GM12878 (cell line): ENCODE measurements at regions of chr10 and their contacts with region 1.

Region 1: GRCh38 chr10:95814011-95814727 is 58.2 kb downstream of the ENTPD1 start:
- DNase-seq: no peak
- ATAC-seq: peak; percentile 6; the same call in 1 of the 3 replicates
- H3K4me3 ChIP-seq: no peak overlapping the region
- H3K27ac ChIP-seq: peak overlapping the region; percentile 26; the same call in 1 of the 2 replicates
- H3K4me1 ChIP-seq: peaks cover 44% of the 10 kb centered on the region
- H3K27me3 ChIP-seq: no peaks in the 10 kb centered on the region
- CTCF ChIP-seq: no peak
- EP300 ChIP-seq: no peak
- POLR2A ChIP-seq: peak; percentile 30; the same call in 1 of the 2 replicates
- RAD21 ChIP-seq: no peak

Region 2: GRCh38 chr10:95741807-95742467 is 72.2 kb before region 1 on chr10:
- CTCF ChIA-PET with region 1: no interaction called
- POLR2A ChIA-PET with region 1: no interaction called
- RAD21 ChIA-PET with region 1: no interaction called
- SMC1A ChIA-PET with region 1: no interaction called
- in situ Hi-C with region 1: no loop called
- intact Hi-C with region 1: no loop called
- DNase-seq: peak; percentile 60
- ATAC-seq: peak; percentile 60
- H3K4me3 ChIP-seq: peak overlapping the region; percentile 27
- H3K27ac ChIP-seq: peak overlapping the region; percentile 85
- H3K4me1 ChIP-seq: peaks cover 9% of the 10 kb centered on the region
- H3K27me3 ChIP-seq: no peaks in the 10 kb centered on the region
- CTCF ChIP-seq: peak in 2 of 3 experiments; percentile 15 to 45; a peak in 3 of 6 replicates
- EP300 ChIP-seq: no peak
- POLR2A ChIP-seq: peak; percentile 43; the same call in 1 of the 2 replicates
- RAD21 ChIP-seq: peak; percentile 71

Region 3: GRCh38 chr10:95783741-95784140 is 30.4 kb before region 1 on chr10:
- CTCF ChIA-PET with region 1: interaction called, 3 read pairs
- POLR2A ChIA-PET with region 1: interaction called, 54 read pairs
- RAD21 ChIA-PET with region 1: interaction called, 108 read pairs
- SMC1A ChIA-PET with region 1: interaction called, 119 read pairs
- in situ Hi-C with region 1: no loop called
- intact Hi-C with region 1: no loop called
- DNase-seq: peak; percentile 94
- ATAC-seq: peak; percentile 50
- H3K4me3 ChIP-seq: no peak overlapping the region
- H3K27ac ChIP-seq: peak overlapping the region; percentile 99
- H3K4me1 ChIP-seq: peaks cover 79% of the 10 kb centered on the region
- H3K27me3 ChIP-seq: no peaks in the 10 kb centered on the region
- CTCF ChIP-seq: no peak
- EP300 ChIP-seq: peak; percentile 93 to 99
- POLR2A ChIP-seq: no peak
- RAD21 ChIP-seq: peak; percentile 8; the same call in 1 of the 2 replicates

Region 4: DNA sequence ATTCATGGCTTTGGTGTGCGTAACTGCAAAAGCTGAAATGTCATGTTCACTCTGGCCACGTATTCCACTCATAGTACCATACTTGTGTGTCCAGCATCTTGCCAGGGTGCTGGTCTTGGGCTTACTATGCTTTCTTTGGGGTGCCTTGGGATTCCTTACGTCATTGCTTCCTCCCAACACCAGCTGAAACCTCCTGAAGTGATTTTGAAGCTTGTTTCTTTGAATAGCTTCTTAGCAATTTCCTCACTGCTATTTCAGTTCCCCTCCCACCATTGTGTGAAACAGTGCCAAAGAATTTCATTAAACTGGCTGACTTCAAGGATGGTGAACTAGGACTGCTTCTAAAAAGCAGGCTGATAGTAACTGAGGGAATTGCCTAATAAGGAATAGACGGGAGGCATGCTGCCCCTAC is 21.3 kb before region 1 on chr10:
- CTCF ChIA-PET with region 1: interaction called, 9 read pairs
- POLR2A ChIA-PET with region 1: interaction called, 21 read pairs
- RAD21 ChIA-PET with region 1: interaction called, 108 read pairs
- SMC1A ChIA-PET with region 1: interaction called, 170 read pairs
- in situ Hi-C with region 1: no loop called
- intact Hi-C with region 1: no loop called
- DNase-seq: peak; percentile 77
- ATAC-seq: peak; percentile 31
- H3K4me3 ChIP-seq: peak overlapping the region; percentile 18; the same call in 1 of the 2 replicates
- H3K27ac ChIP-seq: peak overlapping the region; percentile 93
- H3K4me1 ChIP-seq: peaks cover 64% of the 10 kb centered on the region
- H3K27me3 ChIP-seq: no peaks in the 10 kb centered on the region
- CTCF ChIP-seq: no peak
- EP300 ChIP-seq: peak; percentile 54; a peak in 1 of 4 replicates
- POLR2A ChIP-seq: no peak
- RAD21 ChIP-seq: 0 out of 2 replicates have a peak, but pooled peaks have one; percentile 4

Region 5: GRCh38 chr10:95798096-95798855 is 15.9 kb before region 1 on chr10:
- CTCF ChIA-PET with region 1: interaction called, 9 read pairs
- POLR2A ChIA-PET with region 1: interaction called, 17 read pairs
- RAD21 ChIA-PET with region 1: interaction called, 108 read pairs
- SMC1A ChIA-PET with region 1: interaction called, 170 read pairs
- in situ Hi-C with region 1: no loop called
- intact Hi-C with region 1: no loop called
- DNase-seq: no peak
- ATAC-seq: no peak
- H3K4me3 ChIP-seq: no peak overlapping the region
- H3K27ac ChIP-seq: no peak overlapping the region
- H3K4me1 ChIP-seq: peaks cover 19% of the 10 kb centered on the region
- H3K27me3 ChIP-seq: no peaks in the 10 kb centered on the region
- CTCF ChIP-seq: no peak
- EP300 ChIP-seq: no peak
- POLR2A ChIP-seq: no peak
- RAD21 ChIP-seq: no peak